SK-N-SH (cell line): ENCODE measurements at regions of chr2 and their contacts with region 1.

Region 1: DNA sequence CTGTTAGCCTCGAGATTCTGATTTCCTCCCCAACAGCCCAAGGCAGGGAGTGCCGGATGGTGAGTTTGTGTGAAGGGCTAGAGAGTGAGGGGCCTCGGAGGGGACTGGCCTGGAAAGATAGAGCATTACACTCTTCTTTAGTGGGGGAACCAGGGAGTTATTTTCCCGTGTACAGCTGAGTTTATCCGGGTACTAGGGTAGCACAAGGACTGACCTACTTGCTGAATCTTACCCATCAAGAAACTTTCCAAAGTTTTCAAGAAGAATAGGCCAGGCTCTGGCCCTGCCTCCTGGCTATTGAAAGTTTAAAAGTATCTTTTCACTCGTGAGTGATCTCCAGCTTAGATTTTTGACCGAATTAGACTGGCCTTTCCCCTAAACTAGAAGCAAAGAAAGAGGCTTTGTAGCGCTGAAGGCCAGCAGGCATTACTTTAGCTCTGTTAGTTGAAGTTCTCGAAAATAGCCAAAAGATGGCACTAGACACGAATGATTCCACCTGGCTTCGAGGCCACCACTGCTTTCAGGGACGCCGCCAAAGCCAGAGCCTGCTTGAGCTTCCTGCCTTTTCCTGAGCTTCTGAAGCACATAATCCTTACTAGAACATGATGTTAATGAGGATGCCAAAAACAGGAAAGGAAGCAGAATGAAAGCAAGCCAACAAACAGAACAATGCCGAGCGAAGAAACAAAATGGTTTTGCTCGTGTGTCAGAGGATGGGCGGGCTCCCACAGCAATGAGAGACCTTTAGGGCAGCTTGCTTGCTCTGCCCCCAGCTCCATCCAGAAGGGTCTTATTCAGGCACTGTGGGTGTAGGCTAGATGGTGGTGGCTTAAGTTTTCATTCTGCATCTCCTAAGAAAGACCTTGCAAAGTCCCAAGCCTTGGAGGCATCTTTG is 55.8 kb downstream of the TSN start:
- DNase-seq: peak; percentile 76
- H3K4me3 ChIP-seq: no peak overlapping the region
- H3K27ac ChIP-seq: no peak overlapping the region
- H3K4me1 ChIP-seq: peaks cover 0 to 3% of the 10 kb centered on the region in 2 experiments; a peak in 1 of 4 replicates
- H3K27me3 ChIP-seq: no peaks in the 10 kb centered on the region
- CTCF ChIP-seq: peak; percentile 65
- EP300 ChIP-seq: no peak
- RAD21 ChIP-seq: peak; percentile 93

Region 2: GRCh38 chr2:121446647-121447241 is 364.5 kb before region 1 on chr2:
- CTCF ChIA-PET with region 1: no interaction called
- POLR2A ChIA-PET with region 1: no interaction called
- DNase-seq: no peak
- H3K4me3 ChIP-seq: no peak overlapping the region
- H3K27ac ChIP-seq: no peak overlapping the region
- H3K4me1 ChIP-seq: no peaks in the 10 kb centered on the region
- H3K27me3 ChIP-seq: no peaks in the 10 kb centered on the region
- CTCF ChIP-seq: no peak
- EP300 ChIP-seq: no peak
- RAD21 ChIP-seq: no peak

Region 3: DNA sequence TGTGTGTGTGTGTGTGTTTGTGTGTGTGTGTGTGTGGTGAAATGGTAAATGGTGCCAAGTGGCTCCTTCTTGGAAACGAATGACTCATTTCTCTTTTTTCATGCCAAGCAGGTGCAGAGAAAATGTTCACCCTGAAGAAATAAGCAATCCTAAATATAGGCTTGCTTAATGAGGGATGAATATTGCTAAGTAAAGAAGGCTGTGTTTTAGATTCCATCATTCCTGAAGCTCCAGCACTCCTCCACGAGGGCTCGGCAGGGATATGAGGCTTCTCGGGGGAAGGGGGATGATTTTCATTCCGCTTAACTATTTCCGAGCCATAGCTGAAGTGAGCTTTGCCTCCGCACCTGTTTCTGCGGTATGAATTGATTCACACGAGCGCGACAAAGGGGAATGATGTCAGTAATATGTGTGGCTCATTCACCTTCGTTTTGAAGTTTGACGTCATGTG is 17.1 kb after region 1 on chr2:
- CTCF ChIA-PET with region 1: interaction called, 15 read pairs
- POLR2A ChIA-PET with region 1: no interaction called
- DNase-seq: no peak
- H3K4me3 ChIP-seq: no peak overlapping the region
- H3K27ac ChIP-seq: no peak overlapping the region
- H3K4me1 ChIP-seq: no peaks in the 10 kb centered on the region
- H3K27me3 ChIP-seq: no peaks in the 10 kb centered on the region
- CTCF ChIP-seq: no peak
- EP300 ChIP-seq: no peak
- RAD21 ChIP-seq: no peak

Region 4: GRCh38 chr2:121972203-121972602 is 161.0 kb after region 1 on chr2:
- CTCF ChIA-PET with region 1: interaction called, 15 read pairs
- POLR2A ChIA-PET with region 1: no interaction called
- DNase-seq: no peak
- H3K4me3 ChIP-seq: no peak overlapping the region
- H3K27ac ChIP-seq: no peak overlapping the region
- H3K4me1 ChIP-seq: peaks cover 13 to 32% of the 10 kb centered on the region in 2 experiments; a peak in 3 of 4 replicates
- H3K27me3 ChIP-seq: no peaks in the 10 kb centered on the region
- CTCF ChIP-seq: no peak
- EP300 ChIP-seq: no peak
- RAD21 ChIP-seq: no peak

Region 5: GRCh38 chr2:121998751-121999150 is 187.5 kb after region 1 on chr2:
- CTCF ChIA-PET with region 1: no interaction called
- POLR2A ChIA-PET with region 1: no interaction called
- DNase-seq: no peak
- H3K4me3 ChIP-seq: no peak overlapping the region
- H3K27ac ChIP-seq: peak overlapping the region in 1 of 2 experiments; percentile 96; a peak in 2 of 4 replicates
- H3K4me1 ChIP-seq: peaks cover 0 to 32% of the 10 kb centered on the region in 2 experiments; a peak in 3 of 4 replicates
- H3K27me3 ChIP-seq: no peaks in the 10 kb centered on the region
- CTCF ChIP-seq: no peak
- EP300 ChIP-seq: no peak
- RAD21 ChIP-seq: no peak

Region 6: GRCh38 chr2:122610948-122611609 is 799.9 kb after region 1 on chr2:
- CTCF ChIA-PET with region 1: no interaction called
- POLR2A ChIA-PET with region 1: no interaction called
- DNase-seq: no peak
- H3K4me3 ChIP-seq: no peak overlapping the region
- H3K27ac ChIP-seq: no peak overlapping the region
- H3K4me1 ChIP-seq: no peaks in the 10 kb centered on the region
- H3K27me3 ChIP-seq: no peaks in the 10 kb centered on the region
- CTCF ChIP-seq: no peak
- EP300 ChIP-seq: no peak
- RAD21 ChIP-seq: no peak